GM12878 (cell line): ENCODE measurements at regions of chr2 and their contacts with region 1.

Region 1: GRCh38 chr2:104849618-104850141 is 4.2 kb upstream of the POU3F3 start:
- DNase-seq: no peak
- ATAC-seq: peak; percentile 86
- H3K4me3 ChIP-seq: no peak overlapping the region
- H3K27ac ChIP-seq: no peak overlapping the region
- H3K4me1 ChIP-seq: no peaks in the 10 kb centered on the region
- H3K27me3 ChIP-seq: peaks cover 13 to 31% of the 10 kb centered on the region in 2 experiments
- CTCF ChIP-seq: peak; percentile 60 to 74 (median 72); a peak in 5 of 6 replicates
- EP300 ChIP-seq: no peak
- POLR2A ChIP-seq: no peak
- RAD21 ChIP-seq: peak; percentile 57

Region 2: DNA sequence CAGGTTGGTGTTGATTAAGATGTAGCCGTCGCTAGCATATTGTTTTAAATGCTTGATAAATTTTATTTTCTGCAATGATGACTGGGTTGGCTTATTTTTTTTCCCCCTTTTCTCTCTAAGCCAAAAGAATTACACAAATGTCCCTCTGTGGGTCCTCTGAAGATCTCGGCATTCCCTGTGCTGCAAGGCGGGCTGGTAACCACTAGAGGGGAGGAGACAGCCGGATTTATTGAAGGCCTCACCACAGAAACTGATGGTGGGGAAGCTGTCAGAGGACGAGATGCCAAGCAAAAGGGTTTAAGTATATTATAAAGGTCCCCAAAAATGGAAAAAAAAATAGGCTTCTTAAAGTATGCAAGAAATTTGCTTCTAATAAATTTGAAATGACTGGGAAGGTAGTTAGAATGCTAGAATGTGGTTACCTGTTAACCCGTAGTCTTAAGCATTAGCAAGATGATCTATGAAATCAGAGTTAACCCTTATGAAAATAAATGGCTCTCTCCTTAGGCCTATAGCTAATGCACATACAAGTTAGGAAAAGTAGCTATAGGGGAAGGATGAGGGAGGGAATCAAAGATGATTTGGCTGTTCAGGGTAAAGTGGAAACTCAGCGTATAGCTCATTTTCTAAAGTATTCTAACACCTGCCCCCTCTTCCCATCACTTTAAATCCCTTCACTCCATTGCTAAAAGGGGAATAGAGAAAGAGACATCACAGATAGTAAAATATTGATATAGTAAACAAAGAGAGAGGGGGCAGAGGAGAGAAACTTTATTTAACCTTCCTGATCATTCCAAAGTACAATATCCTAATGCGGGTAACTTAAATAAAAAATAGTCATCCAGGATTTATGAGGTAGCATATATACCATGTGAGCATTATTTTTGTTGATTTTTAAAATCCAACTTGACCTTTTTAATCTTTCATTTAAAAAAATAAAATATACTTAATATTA is 890.2 kb before region 1 on chr2:
- CTCF ChIA-PET with region 1: interaction called, 11 read pairs
- POLR2A ChIA-PET with region 1: no interaction called
- RAD21 ChIA-PET with region 1: interaction called, 3 read pairs
- SMC1A ChIA-PET with region 1: interaction called, 3 read pairs
- in situ Hi-C with region 1: no loop called
- intact Hi-C with region 1: no loop called
- DNase-seq: no peak
- ATAC-seq: peak; percentile 65; the same call in 2 of the 3 replicates
- H3K4me3 ChIP-seq: no peak overlapping the region
- H3K27ac ChIP-seq: no peak overlapping the region
- H3K4me1 ChIP-seq: no peaks in the 10 kb centered on the region
- H3K27me3 ChIP-seq: no peaks in the 10 kb centered on the region
- CTCF ChIP-seq: peak; percentile 35 to 47 (median 40); a peak in 5 of 6 replicates
- EP300 ChIP-seq: no peak
- POLR2A ChIP-seq: no peak
- RAD21 ChIP-seq: peak; percentile 51

Region 3: DNA sequence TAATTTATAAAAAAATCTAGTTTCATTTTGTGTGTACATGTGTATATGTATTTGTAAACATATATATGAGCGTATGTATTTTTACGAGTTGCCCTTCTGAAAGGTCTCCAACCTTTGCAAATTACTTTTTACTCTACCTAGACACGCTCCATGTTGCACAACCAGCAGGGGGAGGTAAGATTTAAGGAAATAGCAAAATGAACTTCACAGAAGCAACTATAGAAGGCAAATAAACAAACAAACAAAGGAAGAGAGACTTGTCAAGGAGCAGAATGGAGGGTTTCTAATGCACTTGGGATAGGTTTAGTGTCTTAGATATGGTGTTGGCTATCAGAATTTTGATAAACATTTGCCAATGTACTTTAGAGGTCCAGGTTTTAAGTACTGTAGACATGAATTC is 816.3 kb before region 1 on chr2:
- CTCF ChIA-PET with region 1: interaction called, 5 read pairs
- POLR2A ChIA-PET with region 1: no interaction called
- RAD21 ChIA-PET with region 1: no interaction called
- SMC1A ChIA-PET with region 1: no interaction called
- in situ Hi-C with region 1: loop called (anchors 25 kb)
- intact Hi-C with region 1: loop called (anchors 5 kb)
- DNase-seq: no peak
- ATAC-seq: no peak
- H3K4me3 ChIP-seq: no peak overlapping the region
- H3K27ac ChIP-seq: no peak overlapping the region
- H3K4me1 ChIP-seq: no peaks in the 10 kb centered on the region
- H3K27me3 ChIP-seq: no peaks in the 10 kb centered on the region
- CTCF ChIP-seq: peak; percentile 9 to 37 (median 36); a peak in 3 of 6 replicates
- EP300 ChIP-seq: no peak
- POLR2A ChIP-seq: no peak
- RAD21 ChIP-seq: peak; percentile 50

Region 4: DNA sequence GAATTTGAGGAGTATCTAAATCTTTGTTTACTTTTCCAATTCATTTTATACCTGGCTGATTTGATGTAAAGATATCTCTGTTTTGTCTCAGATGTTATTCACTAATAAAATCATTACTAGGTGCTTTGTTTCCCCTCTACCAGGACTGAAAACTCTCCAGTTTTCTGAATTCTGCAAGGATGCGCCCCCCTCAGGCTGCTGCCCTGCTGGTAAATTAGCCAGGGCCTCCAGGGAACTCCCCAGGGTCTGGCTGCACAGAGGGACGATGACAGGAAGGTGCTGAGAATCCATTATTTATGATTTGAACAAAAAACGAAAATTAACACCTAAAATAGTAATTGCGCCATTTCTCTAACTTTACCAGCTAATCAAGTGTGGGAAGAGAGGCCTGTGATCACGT is 537.0 kb before region 1 on chr2:
- CTCF ChIA-PET with region 1: no interaction called
- POLR2A ChIA-PET with region 1: no interaction called
- RAD21 ChIA-PET with region 1: no interaction called
- SMC1A ChIA-PET with region 1: no interaction called
- in situ Hi-C with region 1: no loop called
- intact Hi-C with region 1: no loop called
- DNase-seq: no peak
- ATAC-seq: no peak
- H3K4me3 ChIP-seq: no peak overlapping the region
- H3K27ac ChIP-seq: no peak overlapping the region
- H3K4me1 ChIP-seq: no peaks in the 10 kb centered on the region
- H3K27me3 ChIP-seq: no peaks in the 10 kb centered on the region
- CTCF ChIP-seq: no peak
- EP300 ChIP-seq: no peak
- POLR2A ChIP-seq: no peak
- RAD21 ChIP-seq: no peak

Region 5: GRCh38 chr2:104834431-104835153 is 15.1 kb before region 1 on chr2:
- CTCF ChIA-PET with region 1: interaction called, 14 read pairs
- POLR2A ChIA-PET with region 1: no interaction called
- RAD21 ChIA-PET with region 1: interaction called, 4 read pairs
- SMC1A ChIA-PET with region 1: interaction called, 5 read pairs
- in situ Hi-C with region 1: no loop called
- intact Hi-C with region 1: no loop called
- DNase-seq: no peak
- ATAC-seq: no peak
- H3K4me3 ChIP-seq: no peak overlapping the region
- H3K27ac ChIP-seq: no peak overlapping the region
- H3K4me1 ChIP-seq: no peaks in the 10 kb centered on the region
- H3K27me3 ChIP-seq: 0 out of 4 replicates have a peak, but pooled peaks cover 0 to 2% of the 10 kb centered on the region in 2 experiments
- CTCF ChIP-seq: no peak
- EP300 ChIP-seq: no peak
- POLR2A ChIP-seq: no peak
- RAD21 ChIP-seq: no peak